ENCODE measurements at regions of chr19 and their contacts with region 1.

Region 1: GRCh38 chr19:11242864-11243797 is 3.7 kb downstream of the ANGPTL8 start:
- DNase-seq: peak; percentile 97
- H3K4me3 ChIP-seq: peak overlapping the region in 1 of 4 donors; percentile 12
- H3K27ac ChIP-seq: peak overlapping the region; percentile 36 to 70 (median 55)
- H3K4me1 ChIP-seq: peaks cover 0 to 18% (median 9%) of the 10 kb centered on the region in 4 donors
- H3K27me3 ChIP-seq: no peaks in the 10 kb centered on the region
- CTCF ChIP-seq: peak in 3 of 4 experiments; percentile 49 to 88 (median 55)
- EP300 ChIP-seq: no peak
- POLR2A ChIP-seq: no peak

Region 2: DNA sequence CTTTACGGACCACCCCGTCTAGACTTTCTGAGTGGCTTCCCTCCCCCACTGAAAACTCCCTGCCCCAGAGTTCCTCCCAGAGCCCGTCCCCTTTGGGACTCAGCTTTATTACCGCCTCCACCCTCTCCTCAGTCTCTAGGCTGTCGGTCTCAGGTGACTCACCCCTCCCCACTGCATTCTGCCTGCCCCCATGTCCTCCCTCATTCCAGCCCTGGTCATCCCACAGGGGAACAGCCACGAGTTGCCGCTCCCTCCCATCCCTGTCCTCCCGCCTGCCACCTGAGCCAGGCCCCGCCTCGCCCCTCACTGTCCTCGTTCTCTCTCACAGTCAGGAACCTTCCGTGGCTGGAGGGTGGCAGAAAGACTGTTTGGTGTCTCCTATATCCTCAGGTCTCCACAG is 225.0 kb before region 1 on chr19:
- intact Hi-C with region 1: no loop called
- DNase-seq: no peak
- H3K4me3 ChIP-seq: no peak overlapping the region
- H3K27ac ChIP-seq: no peak overlapping the region
- H3K4me1 ChIP-seq: no peaks in the 10 kb centered on the region
- H3K27me3 ChIP-seq: no peaks in the 10 kb centered on the region
- CTCF ChIP-seq: no peak
- EP300 ChIP-seq: no peak
- POLR2A ChIP-seq: no peak

Region 3: GRCh38 chr19:11446652-11447301 is 203.6 kb after region 1 on chr19:
- intact Hi-C with region 1: loop called (anchors 1 kb)
- DNase-seq: peak; percentile 78
- H3K4me3 ChIP-seq: no peak overlapping the region
- H3K27ac ChIP-seq: no peak overlapping the region
- H3K4me1 ChIP-seq: no peaks in the 10 kb centered on the region
- H3K27me3 ChIP-seq: peaks cover 0 to 5% (median 0%) of the 10 kb centered on the region in 3 donors
- CTCF ChIP-seq: peak; percentile 67 to 85 (median 75)
- EP300 ChIP-seq: no peak
- POLR2A ChIP-seq: no peak